Activated T-helper 1 cell treated with anti-CD3 and anti-CD28 coated beads, Interleukin-12 subunit alpha, Interleukin-12 subunit beta, Interleukin-2, Interleukin-4 antibody, amounts not matched to agents 30 ng/mL and 10 ng/mL and 1 ng/mL, durations not matched to agents 14 hours and 24 hours and 36 hours (primary cell): ENCODE measurements at regions of chr12 and their contacts with region 1.

Region 1: GRCh38 chr12:22529281-22530060 is 14.9 kb downstream of the C2CD5 start:
- DNase-seq: no peak
- H3K4me3 Mint-ChIP-seq: no peak overlapping the region
- H3K27ac Mint-ChIP-seq: no peak overlapping the region
- H3K4me1 Mint-ChIP-seq: peaks cover 14% of the 10 kb centered on the region
- H3K27me3 Mint-ChIP-seq: no peaks in the 10 kb centered on the region

Region 2: GRCh38 chr12:22551624-22552023 is 22.2 kb after region 1 on chr12:
- intact Hi-C with region 1: no loop called
- DNase-seq: no peak
- H3K4me3 Mint-ChIP-seq: no peak overlapping the region
- H3K27ac Mint-ChIP-seq: no peak overlapping the region
- H3K4me1 Mint-ChIP-seq: no peaks in the 10 kb centered on the region
- H3K27me3 Mint-ChIP-seq: peaks cover 26% of the 10 kb centered on the region

Region 3: DNA sequence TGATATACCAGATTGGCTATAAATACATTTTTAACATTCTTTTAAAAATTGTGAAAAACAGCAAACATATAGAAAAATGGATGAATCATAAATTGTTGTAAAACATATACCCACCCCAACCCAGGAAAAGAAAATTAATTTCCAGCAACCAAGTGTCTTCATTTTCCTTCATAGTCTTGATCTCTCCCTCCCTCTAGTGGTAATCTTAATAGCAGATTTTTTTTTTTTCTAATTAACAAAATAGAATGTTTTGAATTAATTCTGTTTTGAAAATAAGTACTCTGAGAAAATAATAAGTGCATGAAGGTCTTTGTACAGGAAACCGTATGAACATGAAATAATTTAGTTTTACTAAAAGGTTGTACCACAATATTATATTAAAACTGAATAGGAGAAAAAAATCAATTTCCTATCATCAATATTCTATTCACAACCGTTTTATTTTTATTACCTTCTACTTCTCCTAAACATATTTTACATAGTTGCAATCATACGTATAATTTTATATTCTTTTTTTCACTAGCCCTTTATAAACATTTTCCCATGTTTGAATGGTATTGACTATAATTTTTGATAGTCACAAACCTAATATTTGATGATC is 102.5 kb after region 1 on chr12:
- intact Hi-C with region 1: loop called (anchors 1 kb)
- DNase-seq: no peak
- H3K4me3 Mint-ChIP-seq: no peak overlapping the region
- H3K27ac Mint-ChIP-seq: no peak overlapping the region
- H3K4me1 Mint-ChIP-seq: peaks cover 62% of the 10 kb centered on the region
- H3K27me3 Mint-ChIP-seq: no peaks in the 10 kb centered on the region